ENCODE measurements at regions of chr16 and their contacts with region 1.

Region 1: DNA sequence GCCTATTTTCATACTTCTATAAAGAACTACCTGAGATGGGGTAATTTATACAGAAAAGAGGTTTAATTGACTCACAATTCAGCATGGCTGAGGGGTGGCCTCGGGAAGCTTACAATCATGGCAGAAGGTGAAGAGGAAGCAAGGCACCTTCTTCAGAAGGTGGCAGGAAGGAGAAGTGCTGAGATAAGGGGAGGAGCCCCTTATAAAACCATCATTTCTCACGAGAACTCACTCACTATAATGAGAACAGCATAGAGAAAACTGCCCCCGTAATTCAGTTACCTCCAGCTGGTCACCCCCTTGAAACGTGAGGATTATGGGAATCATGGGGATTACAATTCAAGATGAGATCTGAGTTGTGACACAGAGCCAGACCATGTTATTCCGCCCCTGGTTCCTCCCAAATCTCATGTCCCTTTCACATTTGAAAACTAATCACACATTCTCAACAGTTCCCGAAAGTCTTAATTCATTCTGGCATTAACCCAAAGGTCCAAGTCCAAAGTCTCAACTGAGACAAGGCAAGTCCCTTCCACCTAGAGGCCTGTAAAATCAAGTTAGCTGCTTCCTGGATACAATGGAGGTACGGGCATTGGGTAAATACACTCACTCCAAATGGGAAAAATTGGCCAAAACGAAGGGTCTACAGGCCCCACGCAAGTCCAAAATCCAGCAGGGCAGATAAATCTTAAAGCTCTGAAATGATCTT is 237.7 kb downstream of the CDH13 start:
- DNase-seq: no peak
- H3K4me3 ChIP-seq: no peak overlapping the region
- H3K27ac ChIP-seq: no peak overlapping the region
- H3K4me1 ChIP-seq: peaks cover 10% of the 10 kb centered on the region
- H3K27me3 ChIP-seq: no peaks in the 10 kb centered on the region
- CTCF ChIP-seq: no peak
- POLR2A ChIP-seq: no peak

Region 2: GRCh38 chr16:81551151-81551808 is 1313.2 kb before region 1 on chr16:
- intact Hi-C with region 1: no loop called
- DNase-seq: no peak
- H3K4me3 ChIP-seq: no peak overlapping the region
- H3K27ac ChIP-seq: no peak overlapping the region
- H3K4me1 ChIP-seq: peaks cover 38% of the 10 kb centered on the region
- H3K27me3 ChIP-seq: no peaks in the 10 kb centered on the region
- CTCF ChIP-seq: no peak
- POLR2A ChIP-seq: no peak

Region 3: GRCh38 chr16:82915139-82915824 is 50.8 kb after region 1 on chr16:
- intact Hi-C with region 1: loop called (anchors 2 kb)
- DNase-seq: no peak
- H3K4me3 ChIP-seq: no peak overlapping the region
- H3K27ac ChIP-seq: no peak overlapping the region
- H3K4me1 ChIP-seq: no peaks in the 10 kb centered on the region
- H3K27me3 ChIP-seq: no peaks in the 10 kb centered on the region
- CTCF ChIP-seq: no peak
- POLR2A ChIP-seq: no peak

Region 4: GRCh38 chr16:82926500-82926899 is 62.0 kb after region 1 on chr16:
- intact Hi-C with region 1: no loop called
- DNase-seq: no peak
- H3K4me3 ChIP-seq: no peak overlapping the region
- H3K27ac ChIP-seq: no peak overlapping the region
- H3K4me1 ChIP-seq: peaks cover 16% of the 10 kb centered on the region
- H3K27me3 ChIP-seq: no peaks in the 10 kb centered on the region
- CTCF ChIP-seq: no peak
- POLR2A ChIP-seq: no peak

Region 5: DNA sequence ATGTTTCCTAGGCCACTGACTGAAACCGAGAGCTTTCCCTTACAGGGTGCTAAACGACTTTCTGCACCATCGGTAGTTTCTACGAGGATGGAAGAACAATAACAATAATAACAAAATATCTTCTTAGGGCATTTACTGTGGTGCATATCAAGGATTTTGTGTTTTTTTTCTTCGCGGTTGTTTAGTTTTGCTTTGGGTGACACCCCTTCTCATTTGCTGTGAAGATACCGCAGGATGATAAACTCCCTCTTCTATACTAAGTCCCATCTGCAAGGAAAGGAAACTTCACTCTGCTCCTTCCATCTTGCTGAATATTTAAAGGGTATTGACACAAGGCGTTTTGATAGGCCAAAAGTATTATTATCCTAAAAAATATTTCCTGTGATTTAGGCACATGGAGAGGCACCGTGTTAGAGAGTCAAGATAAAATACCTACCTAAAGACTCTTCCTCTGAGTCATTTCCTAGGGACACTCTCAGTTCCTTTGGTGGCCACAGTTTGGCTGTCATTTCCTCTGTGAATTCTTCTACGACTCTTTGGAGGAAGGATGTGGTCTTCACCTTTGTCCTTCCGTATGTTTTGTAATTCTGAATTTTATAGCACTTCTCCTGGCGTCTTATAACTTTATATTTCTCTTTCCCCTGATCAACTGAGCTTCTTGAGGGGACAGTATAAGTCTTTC is 81.1 kb after region 1 on chr16:
- intact Hi-C with region 1: no loop called
- DNase-seq: no peak
- H3K4me3 ChIP-seq: no peak overlapping the region
- H3K27ac ChIP-seq: no peak overlapping the region
- H3K4me1 ChIP-seq: no peaks in the 10 kb centered on the region
- H3K27me3 ChIP-seq: no peaks in the 10 kb centered on the region
- CTCF ChIP-seq: no peak
- POLR2A ChIP-seq: no peak

Region 6: DNA sequence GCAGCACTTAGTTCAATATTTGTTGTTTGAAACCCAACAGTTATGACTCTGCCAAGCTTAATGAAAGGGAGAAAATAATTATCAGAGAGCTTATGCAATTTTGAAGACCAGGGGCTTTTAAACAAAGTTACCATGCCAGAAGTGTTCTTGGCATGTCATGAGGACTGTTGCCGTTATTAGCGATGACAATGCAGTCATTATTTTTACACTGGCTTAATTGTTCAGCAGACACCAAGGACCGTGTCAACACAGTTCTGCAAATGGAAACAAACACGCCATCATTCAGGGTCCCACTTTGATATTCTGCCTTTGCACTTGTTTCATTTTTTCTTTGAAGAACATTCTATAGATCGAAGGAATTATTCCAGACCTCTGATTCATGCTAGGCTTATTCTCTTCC is 280.8 kb after region 1 on chr16:
- intact Hi-C with region 1: no loop called
- DNase-seq: no peak
- H3K4me3 ChIP-seq: no peak overlapping the region
- H3K27ac ChIP-seq: no peak overlapping the region
- H3K4me1 ChIP-seq: no peaks in the 10 kb centered on the region
- H3K27me3 ChIP-seq: no peaks in the 10 kb centered on the region
- CTCF ChIP-seq: no peak
- POLR2A ChIP-seq: no peak